Activated CD8-positive, alpha-beta T cell treated with anti-CD3 and anti-CD28 coated beads, Interleukin-2, amount 10 ng/mL, durations not matched to agents 7 days and 5 days (primary cell): ENCODE measurements at regions of chr2 and their contacts with region 1.

Region 1: DNA sequence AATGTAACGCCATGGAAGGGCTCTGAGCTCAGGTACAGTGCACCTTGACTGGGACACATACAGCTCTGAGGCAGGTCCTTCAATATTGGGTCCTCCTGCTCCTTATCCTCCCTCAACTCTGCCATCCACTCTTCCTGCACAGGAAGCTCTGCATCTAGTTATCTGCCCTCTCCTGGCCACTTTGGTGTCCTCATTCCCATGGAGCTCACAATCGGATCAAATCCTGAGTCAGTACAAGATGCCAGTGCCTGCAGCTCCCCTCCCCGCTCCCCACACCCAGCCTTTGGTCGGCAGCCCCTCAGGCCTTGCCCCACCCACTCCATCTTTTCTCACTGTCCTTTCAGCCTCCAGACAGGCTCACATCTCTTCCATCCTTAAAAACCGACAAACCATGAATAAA is 58.0 kb downstream of the LRRFIP1 start:
- DNase-seq: no peak
- ATAC-seq: no peak
- H3K4me3 Mint-ChIP-seq: no peak overlapping the region
- H3K27ac Mint-ChIP-seq: no peak overlapping the region
- H3K4me1 Mint-ChIP-seq: peaks cover 53% of the 10 kb centered on the region
- H3K27me3 Mint-ChIP-seq: no peaks in the 10 kb centered on the region

Region 2: GRCh38 chr2:237500681-237501424 is 184.6 kb before region 1 on chr2:
- CTCF ChIA-PET with region 1: no interaction called
- POLR2A ChIA-PET with region 1: no interaction called
- DNase-seq: no peak
- ATAC-seq: no peak
- H3K4me3 Mint-ChIP-seq: no peak overlapping the region
- H3K27ac Mint-ChIP-seq: no peak overlapping the region
- H3K4me1 Mint-ChIP-seq: no peaks in the 10 kb centered on the region
- H3K27me3 Mint-ChIP-seq: peaks cover 18% of the 10 kb centered on the region

Region 3: DNA sequence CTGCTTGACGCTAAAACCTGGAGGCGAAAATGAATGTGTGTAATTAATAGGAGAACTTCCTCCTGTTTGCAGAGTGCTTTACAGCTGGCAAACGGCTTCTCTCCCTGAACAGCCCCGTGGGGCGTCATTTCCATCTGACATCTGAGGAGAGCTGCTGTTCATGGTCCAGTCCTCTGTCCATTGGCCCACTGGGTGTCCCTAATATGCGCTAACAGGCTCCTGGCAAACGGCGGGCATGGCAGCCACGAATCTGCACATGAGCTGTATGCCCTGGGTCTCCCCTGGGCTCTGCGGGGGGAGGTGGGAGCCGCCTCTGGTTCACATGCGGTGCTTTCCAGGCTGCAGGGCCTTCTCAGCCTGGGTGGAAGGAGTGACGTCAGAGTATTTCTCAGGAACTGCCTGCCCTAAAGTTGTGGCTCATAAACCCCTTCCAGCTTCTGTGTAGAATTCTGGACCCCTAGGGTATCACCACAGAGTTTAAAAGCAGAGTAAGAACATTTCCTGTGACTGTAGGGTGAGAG is 15.2 kb after region 1 on chr2:
- CTCF ChIA-PET with region 1: interaction called, 18 read pairs
- POLR2A ChIA-PET with region 1: interaction called, 45 read pairs
- DNase-seq: peak; percentile 64
- ATAC-seq: peak; percentile 52
- H3K4me3 Mint-ChIP-seq: peak overlapping the region; percentile 65
- H3K27ac Mint-ChIP-seq: peak overlapping the region; percentile 89
- H3K4me1 Mint-ChIP-seq: peaks cover 97% of the 10 kb centered on the region
- H3K27me3 Mint-ChIP-seq: no peaks in the 10 kb centered on the region